Psoas muscle (tissue), 8 donors: ENCODE measurements at regions of chr6 and their contacts with region 1.

Region 1: GRCh38 chr6:168735268-168735949 is 294.4 kb downstream of the SMOC2 start:
- DNase-seq: no peak
- ATAC-seq: no peak
- H3K4me3 ChIP-seq: no peak overlapping the region
- H3K27ac ChIP-seq: no peak overlapping the region
- H3K4me1 ChIP-seq: no peaks in the 10 kb centered on the region
- H3K27me3 ChIP-seq: no peaks in the 10 kb centered on the region
- CTCF ChIP-seq: no peak

Region 2: DNA sequence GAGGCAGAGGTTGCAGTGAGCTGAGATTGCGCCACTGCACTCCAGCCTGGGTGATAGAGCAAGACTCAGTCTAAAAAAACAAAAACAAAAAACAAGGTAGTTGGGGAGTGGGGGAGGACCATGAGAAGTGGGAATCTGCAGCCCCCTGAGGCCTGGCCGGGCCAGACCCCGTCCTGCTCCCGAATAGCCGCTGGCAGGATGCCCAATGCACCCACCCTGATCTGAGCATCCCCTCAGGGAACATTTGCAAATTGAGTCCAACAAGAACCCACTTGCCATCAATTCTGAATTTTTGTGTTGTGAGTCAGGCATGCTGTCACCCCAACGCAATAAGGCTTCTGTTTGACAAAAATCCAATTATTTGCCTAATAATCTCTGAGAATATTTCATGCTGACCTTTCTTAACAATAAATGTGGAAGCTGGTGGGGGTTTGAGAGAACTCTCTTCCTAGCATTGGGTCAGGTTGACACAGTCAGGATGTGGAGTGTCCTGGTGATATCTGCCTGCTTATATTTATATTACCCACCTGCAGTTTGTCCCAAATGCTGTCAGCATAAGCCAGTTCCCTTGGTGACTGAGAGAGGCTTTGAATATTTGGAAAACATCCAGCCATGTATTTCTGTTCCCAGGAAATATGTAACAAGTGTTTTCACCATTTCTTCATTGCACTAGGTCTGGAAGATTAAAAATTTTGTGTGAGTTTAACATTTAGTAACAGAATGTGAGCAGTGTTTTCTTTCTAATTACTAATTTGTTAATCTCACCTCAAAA is 628.0 kb before region 1 on chr6:
- intact Hi-C with region 1: no loop called
- DNase-seq: peak; percentile 14 to 53
- ATAC-seq: no peak
- H3K4me3 ChIP-seq: no peak overlapping the region
- H3K27ac ChIP-seq: no peak overlapping the region
- H3K4me1 ChIP-seq: no peaks in the 10 kb centered on the region
- H3K27me3 ChIP-seq: peaks cover 0 to 14% (median 0%) of the 10 kb centered on the region in 3 donors
- CTCF ChIP-seq: no peak

Region 3: DNA sequence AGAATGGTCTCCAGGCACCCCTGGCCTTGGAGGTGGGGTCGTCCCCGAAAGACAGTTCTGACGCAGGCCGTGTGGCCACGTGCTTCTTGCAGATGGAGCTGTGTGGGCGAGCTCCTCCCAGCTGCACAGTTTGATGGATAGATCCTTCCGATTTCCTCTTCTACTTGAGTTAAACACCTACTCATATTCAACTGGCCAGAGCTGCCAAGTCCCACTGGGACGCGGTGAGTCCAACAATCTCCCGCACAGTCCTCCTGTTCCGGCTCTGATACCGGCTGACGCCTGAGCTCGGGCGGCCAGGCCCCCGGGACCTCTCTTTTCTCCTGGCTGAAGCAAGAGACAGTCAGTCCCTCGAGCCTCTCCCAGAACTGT is 357.9 kb before region 1 on chr6:
- intact Hi-C with region 1: no loop called
- DNase-seq: peak; percentile 62 to 85
- ATAC-seq: peak; percentile 44 to 76 (median 66)
- H3K4me3 ChIP-seq: no peak overlapping the region
- H3K27ac ChIP-seq: no peak overlapping the region
- H3K4me1 ChIP-seq: no peaks in the 10 kb centered on the region
- H3K27me3 ChIP-seq: peaks cover 0 to 10% (median 2%) of the 10 kb centered on the region in 3 donors
- CTCF ChIP-seq: no peak

Region 4: DNA sequence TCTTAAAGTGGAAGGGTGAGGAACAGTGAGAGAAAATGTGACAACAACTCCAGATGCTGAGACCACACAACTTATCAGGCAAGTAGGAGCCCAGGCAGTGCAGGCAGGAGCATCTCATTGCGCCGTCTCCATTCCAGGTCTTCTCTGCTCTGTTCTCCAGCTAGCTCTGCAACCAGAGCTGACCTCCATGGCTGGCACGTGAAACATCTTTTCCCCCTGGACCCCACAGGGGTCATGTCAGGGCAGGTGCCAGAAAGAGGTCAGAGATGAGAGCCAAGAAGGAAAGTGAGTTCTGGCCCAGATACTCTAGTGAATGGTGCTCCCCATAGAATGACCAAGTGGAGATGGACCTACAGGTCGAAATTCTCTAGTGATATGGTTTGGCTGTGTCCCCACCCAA is 13.0 kb before region 1 on chr6:
- intact Hi-C with region 1: loop called in 1 of 2 experiments (anchors 1 kb)
- DNase-seq: no peak
- ATAC-seq: no peak
- H3K4me3 ChIP-seq: no peak overlapping the region
- H3K27ac ChIP-seq: no peak overlapping the region
- H3K4me1 ChIP-seq: no peaks in the 10 kb centered on the region
- H3K27me3 ChIP-seq: peaks cover 0 to 4% (median 0%) of the 10 kb centered on the region in 3 donors
- CTCF ChIP-seq: no peak